ENCODE measurements at regions of chr4 and their contacts with region 1.

Region 1: DNA sequence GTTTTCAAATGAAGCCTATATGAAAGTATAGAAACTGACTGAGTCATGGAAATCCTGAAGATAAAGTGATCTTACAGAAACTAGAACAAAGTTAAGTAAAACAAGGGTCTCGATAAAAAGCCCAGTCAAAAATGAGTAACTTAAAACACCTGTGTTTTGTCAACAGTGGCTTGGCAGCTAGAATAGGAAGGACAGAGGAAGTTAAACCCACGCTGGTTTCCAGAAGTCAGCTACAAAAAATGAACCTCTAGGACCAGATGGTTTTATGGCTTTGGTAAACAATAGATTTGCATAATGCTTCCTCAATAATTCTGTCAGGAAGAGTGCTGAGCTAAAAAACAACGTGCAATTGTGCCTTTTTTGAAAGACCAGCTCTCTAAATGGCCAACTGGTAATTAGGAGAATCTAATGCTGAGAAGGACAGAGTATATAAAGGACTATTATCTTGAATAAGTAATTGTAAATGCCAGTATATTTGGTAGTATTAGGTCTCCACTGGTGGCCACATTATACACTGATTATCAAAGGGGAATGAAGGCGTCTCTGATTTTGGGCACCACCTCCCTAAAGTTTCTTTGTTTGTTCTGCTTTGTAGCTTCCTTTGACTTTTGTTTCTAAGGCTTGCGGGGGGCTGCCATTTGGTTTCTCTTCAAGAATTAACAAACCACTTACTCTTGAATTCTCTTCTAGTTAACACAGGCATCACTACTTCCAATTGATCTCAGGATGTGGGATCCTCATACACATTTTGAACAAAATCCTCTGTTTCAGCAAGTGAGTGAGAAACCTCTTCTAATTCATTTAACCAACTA is 72.2 kb upstream of the PPP3CA start:
- DNase-seq: peak in 1 of 2 donors; percentile 14
- ATAC-seq: no peak
- H3K4me3 ChIP-seq: no peak overlapping the region
- H3K4me3 Mint-ChIP-seq: peak overlapping the region; percentile 43
- H3K27ac ChIP-seq: no peak overlapping the region
- H3K27ac Mint-ChIP-seq: no peak overlapping the region
- H3K4me1 ChIP-seq: peaks cover 28% of the 10 kb centered on the region
- H3K4me1 Mint-ChIP-seq: peaks cover 54 to 55% of the 10 kb centered on the region in 2 donors
- H3K27me3 ChIP-seq: no peaks in the 10 kb centered on the region
- H3K27me3 Mint-ChIP-seq: peaks cover 0 to 2% of the 10 kb centered on the region in 2 donors
- CTCF ChIP-seq: no peak

Region 2: DNA sequence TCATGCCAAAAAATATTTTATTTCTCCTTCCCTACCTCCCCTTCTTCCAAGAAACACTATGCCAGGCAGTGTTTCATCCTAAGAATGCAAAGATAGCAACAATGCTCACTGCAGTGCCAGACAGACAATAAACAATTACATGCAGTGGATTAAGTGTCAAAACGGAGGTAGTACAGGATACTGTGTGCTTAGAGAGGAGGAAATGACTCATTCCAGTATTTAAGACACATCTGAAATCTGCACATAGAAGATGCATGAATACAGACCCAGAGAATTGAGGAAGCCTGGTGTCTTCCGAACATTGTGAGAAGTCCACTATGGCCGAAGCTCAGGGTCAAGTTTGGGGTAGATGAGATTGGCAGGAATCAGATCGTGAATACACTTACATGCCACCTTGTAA is 398.6 kb before region 1 on chr4:
- intact Hi-C with region 1: loop called (anchors 5 kb)
- DNase-seq: peak in 1 of 2 donors; percentile 67
- ATAC-seq: peak; percentile 71 to 91 (median 77)
- H3K4me3 ChIP-seq: no peak overlapping the region
- H3K4me3 Mint-ChIP-seq: peak overlapping the region; percentile 52
- H3K27ac ChIP-seq: peak overlapping the region; percentile 72
- H3K27ac Mint-ChIP-seq: peak overlapping the region; percentile 87 to 93
- H3K4me1 ChIP-seq: peaks cover 28% of the 10 kb centered on the region
- H3K4me1 Mint-ChIP-seq: peaks cover 49 to 59% of the 10 kb centered on the region in 2 donors
- H3K27me3 ChIP-seq: no peaks in the 10 kb centered on the region
- H3K27me3 Mint-ChIP-seq: no peaks in the 10 kb centered on the region
- CTCF ChIP-seq: no peak

Region 3: DNA sequence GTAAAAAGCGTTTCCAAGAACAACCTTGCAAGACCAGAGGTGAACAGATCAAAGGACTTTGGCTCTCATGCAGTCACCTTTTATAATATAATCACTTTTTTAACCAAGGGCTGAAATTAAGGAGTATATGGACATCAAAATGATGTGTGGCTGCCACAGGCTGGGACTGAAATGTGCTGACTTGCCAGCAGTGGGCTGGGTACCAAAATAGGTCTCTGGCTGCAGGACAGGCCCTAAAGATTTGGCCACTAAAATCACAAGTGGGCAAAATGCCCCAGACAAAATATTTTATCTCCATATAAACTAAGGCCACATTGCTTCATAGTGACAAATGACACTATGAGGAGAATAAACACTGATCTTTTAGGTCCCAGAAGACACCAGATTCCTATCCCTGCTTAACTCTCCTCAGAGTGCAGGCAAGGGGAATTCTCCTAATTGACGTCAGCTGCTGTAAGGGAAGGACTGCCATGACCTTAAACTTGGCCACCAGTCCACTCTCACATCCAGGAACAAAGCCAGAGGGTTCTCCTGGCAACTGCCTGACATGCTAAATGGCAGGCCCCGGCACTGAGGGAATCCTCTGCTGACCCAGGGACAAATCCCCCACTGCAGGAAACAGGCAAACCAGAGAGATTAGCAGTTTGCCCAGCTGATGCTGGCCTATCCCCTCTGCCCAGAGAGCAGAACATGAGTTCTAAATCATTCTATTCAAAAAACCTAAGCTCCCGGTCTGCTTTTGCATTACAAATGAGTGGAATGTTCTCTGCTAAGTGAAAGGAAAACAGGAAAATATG is 228.0 kb before region 1 on chr4:
- intact Hi-C with region 1: loop called (anchors 10 kb)
- DNase-seq: no peak
- ATAC-seq: no peak
- H3K4me3 ChIP-seq: no peak overlapping the region
- H3K4me3 Mint-ChIP-seq: no peak overlapping the region
- H3K27ac ChIP-seq: no peak overlapping the region
- H3K27ac Mint-ChIP-seq: peak overlapping the region; percentile 27 to 61
- H3K4me1 ChIP-seq: no peaks in the 10 kb centered on the region
- H3K4me1 Mint-ChIP-seq: peaks cover 49 to 55% of the 10 kb centered on the region in 2 donors
- H3K27me3 ChIP-seq: no peaks in the 10 kb centered on the region
- H3K27me3 Mint-ChIP-seq: no peaks in the 10 kb centered on the region
- CTCF ChIP-seq: no peak

Region 4: GRCh38 chr4:101292901-101293300 is 126.6 kb before region 1 on chr4:
- intact Hi-C with region 1: loop called (anchors 5 kb)
- DNase-seq: no peak
- ATAC-seq: no peak
- H3K4me3 ChIP-seq: no peak overlapping the region
- H3K4me3 Mint-ChIP-seq: no peak overlapping the region
- H3K27ac ChIP-seq: no peak overlapping the region
- H3K27ac Mint-ChIP-seq: peak overlapping the region in 1 of 2 donors; percentile 47
- H3K4me1 ChIP-seq: peaks cover 9% of the 10 kb centered on the region
- H3K4me1 Mint-ChIP-seq: peaks cover 79 to 83% of the 10 kb centered on the region in 2 donors
- H3K27me3 ChIP-seq: no peaks in the 10 kb centered on the region
- H3K27me3 Mint-ChIP-seq: no peaks in the 10 kb centered on the region
- CTCF ChIP-seq: no peak

Region 5: DNA sequence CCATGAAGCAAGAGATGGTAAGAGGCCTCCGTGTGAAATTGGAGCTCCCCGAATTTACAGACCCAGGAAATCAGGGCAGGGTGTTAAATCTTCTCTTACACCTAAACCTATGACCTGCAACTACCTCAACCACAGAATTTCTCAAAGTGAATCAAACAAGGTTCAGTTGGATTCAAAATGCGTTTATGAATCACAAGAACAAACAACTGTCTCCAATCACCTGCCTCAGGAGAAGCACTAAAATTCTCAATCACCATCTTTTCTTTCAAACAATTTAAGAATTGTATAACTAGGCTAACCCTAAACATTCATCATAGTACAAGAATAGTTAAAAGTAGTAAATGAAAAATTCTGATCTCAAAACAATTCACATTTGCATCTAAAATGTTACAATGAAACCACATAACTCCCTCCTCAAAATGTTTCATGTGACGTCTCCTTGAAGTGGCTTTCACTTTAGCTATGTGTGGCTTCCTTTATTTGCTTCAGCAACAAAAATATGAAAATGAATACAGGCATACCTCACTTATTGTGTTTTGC is 91.4 kb before region 1 on chr4:
- intact Hi-C with region 1: loop called (anchors 5 kb)
- DNase-seq: peak in 1 of 2 donors; percentile 78
- ATAC-seq: peak; percentile 76 to 84 (median 84)
- H3K4me3 ChIP-seq: no peak overlapping the region
- H3K4me3 Mint-ChIP-seq: peak overlapping the region; percentile 74
- H3K27ac ChIP-seq: peak overlapping the region; percentile 80
- H3K27ac Mint-ChIP-seq: peak overlapping the region; percentile 90 to 92
- H3K4me1 ChIP-seq: peaks cover 16% of the 10 kb centered on the region
- H3K4me1 Mint-ChIP-seq: peaks cover 85 to 93% of the 10 kb centered on the region in 2 donors
- H3K27me3 ChIP-seq: no peaks in the 10 kb centered on the region
- H3K27me3 Mint-ChIP-seq: no peaks in the 10 kb centered on the region
- CTCF ChIP-seq: no peak

Region 6: GRCh38 chr4:101527188-101527587 is 107.7 kb after region 1 on chr4:
- intact Hi-C with region 1: loop called (anchors 1 kb)
- DNase-seq: peak; percentile 51 to 88
- ATAC-seq: peak; percentile 95 to 98 (median 97)
- H3K4me3 ChIP-seq: no peak overlapping the region
- H3K4me3 Mint-ChIP-seq: peak overlapping the region; percentile 1
- H3K27ac ChIP-seq: no peak overlapping the region
- H3K27ac Mint-ChIP-seq: peak overlapping the region; percentile 56 to 71
- H3K4me1 ChIP-seq: no peaks in the 10 kb centered on the region
- H3K4me1 Mint-ChIP-seq: peaks cover 13 to 20% of the 10 kb centered on the region in 2 donors
- H3K27me3 ChIP-seq: peaks cover 28% of the 10 kb centered on the region
- H3K27me3 Mint-ChIP-seq: peaks cover 50 to 55% of the 10 kb centered on the region in 2 donors
- CTCF ChIP-seq: no peak

Measured in natural killer cell (primary cell).